Ovary (tissue), 10 donors: ENCODE measurements at regions of chr10 and their contacts with region 1.

Region 1: GRCh38 chr10:48237259-48238250 is 36.9 kb downstream of the FRMPD2 start:
- DNase-seq: no peak
- H3K4me3 ChIP-seq: no peak overlapping the region
- H3K27ac ChIP-seq: no peak overlapping the region
- H3K4me1 ChIP-seq: no peaks in the 10 kb centered on the region
- H3K27me3 ChIP-seq: no peaks in the 10 kb centered on the region
- CTCF ChIP-seq: no peak
- EP300 ChIP-seq: no peak
- POLR2A ChIP-seq: no peak

Region 2: DNA sequence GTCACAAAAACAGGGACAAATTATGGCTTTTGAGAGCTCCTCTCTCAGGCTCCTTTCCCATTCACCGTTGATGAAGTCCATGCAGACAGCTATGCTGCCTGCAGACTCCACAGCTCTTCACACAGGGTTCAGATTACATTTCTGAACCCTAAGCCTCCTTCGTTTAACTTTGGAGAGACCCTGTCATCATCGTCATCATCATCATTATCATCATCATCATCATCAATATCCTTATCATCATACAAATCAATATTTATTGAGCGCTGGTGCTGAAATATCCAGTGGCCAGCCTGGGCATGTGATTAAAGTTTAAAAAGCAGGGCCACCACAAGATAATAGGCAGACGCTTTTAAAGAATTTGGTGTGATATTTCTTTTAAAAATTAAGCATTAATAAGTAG is 29.7 kb before region 1 on chr10:
- intact Hi-C with region 1: loop called in 1 of 4 experiments (anchors 1 kb)
- DNase-seq: no peak
- H3K4me3 ChIP-seq: no peak overlapping the region
- H3K27ac ChIP-seq: no peak overlapping the region
- H3K4me1 ChIP-seq: no peaks in the 10 kb centered on the region
- H3K27me3 ChIP-seq: no peaks in the 10 kb centered on the region
- CTCF ChIP-seq: no peak
- EP300 ChIP-seq: no peak
- POLR2A ChIP-seq: no peak